Activated CD8-positive, alpha-beta T cell treated with anti-CD3 and anti-CD28 coated beads, Interleukin-2, amount 10 ng/mL, durations not matched to agents 7 days and 5 days (primary cell): ENCODE measurements at regions of chr13 and their contacts with region 1.

Region 1: GRCh38 chr13:49996951-49997895 is at the start of gene TRIM13:
- DNase-seq: peak; percentile 89
- ATAC-seq: peak; percentile 87
- H3K4me3 Mint-ChIP-seq: peak within 1 kb of the TSS; percentile 84
- H3K27ac Mint-ChIP-seq: peak within 1 kb of the TSS; percentile 91
- H3K4me1 Mint-ChIP-seq: peaks cover 32% of the 10 kb centered on the region
- H3K27me3 Mint-ChIP-seq: no peaks in the 10 kb centered on the region
- total RNA-seq, gene TRIM13: 11.8 to 12.0 TPM

Region 2: DNA sequence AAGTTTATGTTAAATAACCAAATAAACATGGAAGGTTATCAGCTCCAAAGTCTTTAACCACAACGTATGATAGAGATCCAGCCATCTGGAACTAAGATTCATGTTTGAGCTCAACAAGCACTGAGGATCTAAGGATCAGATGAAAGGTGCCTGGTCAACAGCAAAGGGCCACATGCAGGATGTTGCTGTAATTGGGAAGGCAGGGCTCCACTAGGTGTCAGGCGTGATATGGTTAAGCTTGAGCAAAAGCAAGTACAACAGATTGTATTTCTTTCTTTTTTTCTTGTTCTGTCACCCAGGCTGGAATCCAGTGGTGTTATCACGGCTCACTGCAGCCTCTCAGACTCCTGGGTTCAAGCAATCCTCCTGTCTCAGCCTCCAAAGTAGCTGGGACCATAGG is 318.0 kb before region 1 on chr13:
- CTCF ChIA-PET with region 1: no interaction called
- POLR2A ChIA-PET with region 1: no interaction called
- DNase-seq: peak; percentile 33
- ATAC-seq: no peak
- H3K4me3 Mint-ChIP-seq: no peak overlapping the region
- H3K27ac Mint-ChIP-seq: no peak overlapping the region
- H3K4me1 Mint-ChIP-seq: peaks cover 6% of the 10 kb centered on the region
- H3K27me3 Mint-ChIP-seq: no peaks in the 10 kb centered on the region

Region 3: DNA sequence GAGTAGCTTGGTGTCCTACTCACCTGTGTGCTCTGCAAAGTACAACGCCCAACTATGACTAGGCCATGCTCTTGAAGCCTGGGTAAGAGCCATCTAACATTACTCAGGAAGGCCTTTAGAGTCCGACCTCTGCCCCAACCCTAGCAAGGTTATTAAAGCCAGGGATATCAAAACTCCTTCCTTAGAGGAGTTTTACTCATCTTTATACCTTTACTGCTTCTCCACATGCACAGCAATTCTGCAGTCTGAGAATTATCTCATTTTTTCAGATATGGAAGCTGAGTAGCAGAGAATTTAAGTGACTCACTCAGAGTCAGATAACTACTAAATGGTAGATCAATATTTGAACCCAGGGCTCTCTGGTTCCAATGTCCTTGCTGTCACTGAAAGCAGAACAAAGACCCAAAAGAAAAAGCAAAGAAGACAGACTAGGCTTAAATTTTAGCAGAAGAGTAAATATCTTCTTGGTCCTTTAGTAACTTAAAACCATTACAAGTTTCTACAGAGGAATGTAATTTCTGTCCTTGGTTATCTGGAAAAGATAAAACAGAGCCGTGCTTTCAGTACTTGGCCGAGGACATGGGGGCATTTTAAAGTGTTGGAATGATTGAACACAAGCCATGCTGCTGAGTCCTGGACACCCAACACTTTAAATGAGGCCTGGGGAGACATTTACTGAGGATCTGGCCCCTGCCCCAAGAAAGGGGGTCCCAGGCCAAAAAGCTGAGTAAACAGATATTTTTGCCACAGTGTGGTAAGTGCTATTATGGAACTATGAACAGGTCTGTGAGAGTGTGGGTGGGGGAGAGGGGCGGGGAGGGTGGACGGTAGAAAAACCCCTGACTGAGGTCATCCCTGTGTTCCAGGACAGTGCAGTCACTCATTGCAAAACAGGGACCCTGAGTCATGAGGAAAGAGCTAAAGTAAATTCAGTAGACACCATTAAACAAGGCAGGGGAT is 186.4 kb before region 1 on chr13:
- CTCF ChIA-PET with region 1: no interaction called
- POLR2A ChIA-PET with region 1: no interaction called
- DNase-seq: no peak
- ATAC-seq: no peak
- H3K4me3 Mint-ChIP-seq: no peak overlapping the region
- H3K27ac Mint-ChIP-seq: no peak overlapping the region
- H3K4me1 Mint-ChIP-seq: no peaks in the 10 kb centered on the region
- H3K27me3 Mint-ChIP-seq: peaks cover 16% of the 10 kb centered on the region

Region 4: GRCh38 chr13:49858183-49858856 is 138.9 kb before region 1 on chr13:
- CTCF ChIA-PET with region 1: no interaction called
- POLR2A ChIA-PET with region 1: no interaction called
- DNase-seq: no peak
- ATAC-seq: no peak
- H3K4me3 Mint-ChIP-seq: no peak overlapping the region
- H3K27ac Mint-ChIP-seq: no peak overlapping the region
- H3K4me1 Mint-ChIP-seq: no peaks in the 10 kb centered on the region
- H3K27me3 Mint-ChIP-seq: no peaks in the 10 kb centered on the region

Region 5: GRCh38 chr13:49976314-49977258 is 20.6 kb before region 1 on chr13:
- CTCF ChIA-PET with region 1: interaction called, 24 read pairs
- POLR2A ChIA-PET with region 1: interaction called, 3 read pairs
- DNase-seq: peak; percentile 81
- ATAC-seq: peak; percentile 81
- H3K4me3 Mint-ChIP-seq: no peak overlapping the region
- H3K27ac Mint-ChIP-seq: no peak overlapping the region
- H3K4me1 Mint-ChIP-seq: peaks cover 4% of the 10 kb centered on the region
- H3K27me3 Mint-ChIP-seq: no peaks in the 10 kb centered on the region

Region 6: GRCh38 chr13:49985129-49985528 is 12.1 kb before region 1 on chr13:
- CTCF ChIA-PET with region 1: interaction called, 11 read pairs
- POLR2A ChIA-PET with region 1: interaction called, 3 read pairs
- DNase-seq: no peak
- ATAC-seq: no peak
- H3K4me3 Mint-ChIP-seq: no peak overlapping the region
- H3K27ac Mint-ChIP-seq: no peak overlapping the region
- H3K4me1 Mint-ChIP-seq: no peaks in the 10 kb centered on the region
- H3K27me3 Mint-ChIP-seq: no peaks in the 10 kb centered on the region

Region 7: GRCh38 chr13:50055454-50055853 is 58.2 kb after region 1 on chr13:
- CTCF ChIA-PET with region 1: interaction called, 13 read pairs
- POLR2A ChIA-PET with region 1: interaction called, 4 read pairs
- DNase-seq: no peak
- ATAC-seq: no peak
- H3K4me3 Mint-ChIP-seq: no peak overlapping the region
- H3K27ac Mint-ChIP-seq: no peak overlapping the region
- H3K4me1 Mint-ChIP-seq: peaks cover 51% of the 10 kb centered on the region
- H3K27me3 Mint-ChIP-seq: no peaks in the 10 kb centered on the region

Region 8: DNA sequence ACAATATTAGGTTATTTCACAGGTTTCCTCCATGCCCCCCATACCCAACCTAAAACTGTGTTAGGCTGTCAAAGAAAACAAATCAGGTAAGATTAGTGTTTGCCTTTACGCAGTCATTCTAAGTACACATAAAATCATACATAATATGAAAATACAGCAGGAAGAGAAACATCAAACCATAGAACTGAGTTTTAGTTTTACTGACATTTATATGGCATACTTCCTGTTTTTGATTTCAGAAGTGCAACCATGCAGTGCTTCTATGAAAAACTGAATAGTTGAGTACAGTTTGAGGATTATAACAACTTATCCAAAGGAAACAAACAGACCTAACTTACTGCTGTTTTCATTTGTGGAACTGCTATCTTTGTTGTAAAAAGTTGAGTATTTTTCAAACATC is 109.3 kb after region 1 on chr13:
- CTCF ChIA-PET with region 1: interaction called, 10 read pairs
- POLR2A ChIA-PET with region 1: no interaction called
- DNase-seq: no peak
- ATAC-seq: peak; percentile 42
- H3K4me3 Mint-ChIP-seq: no peak overlapping the region
- H3K27ac Mint-ChIP-seq: peak overlapping the region; percentile 82
- H3K4me1 Mint-ChIP-seq: peaks cover 22% of the 10 kb centered on the region
- H3K27me3 Mint-ChIP-seq: no peaks in the 10 kb centered on the region

Region 9: GRCh38 chr13:50123862-50124536 is 126.8 kb after region 1 on chr13:
- CTCF ChIA-PET with region 1: interaction called, 34 read pairs
- POLR2A ChIA-PET with region 1: interaction called, 40 read pairs
- DNase-seq: peak; percentile 76
- ATAC-seq: peak; percentile 74
- H3K4me3 Mint-ChIP-seq: peak overlapping the region; percentile 84
- H3K27ac Mint-ChIP-seq: peak overlapping the region; percentile 90
- H3K4me1 Mint-ChIP-seq: peaks cover 47% of the 10 kb centered on the region
- H3K27me3 Mint-ChIP-seq: peaks cover 7% of the 10 kb centered on the region